Activated CD4-positive, alpha-beta memory T cell treated with anti-CD3 and anti-CD28 coated beads for 36 hours (primary cell): ENCODE measurements at regions of chr18 and their contacts with region 1.

Region 1: DNA sequence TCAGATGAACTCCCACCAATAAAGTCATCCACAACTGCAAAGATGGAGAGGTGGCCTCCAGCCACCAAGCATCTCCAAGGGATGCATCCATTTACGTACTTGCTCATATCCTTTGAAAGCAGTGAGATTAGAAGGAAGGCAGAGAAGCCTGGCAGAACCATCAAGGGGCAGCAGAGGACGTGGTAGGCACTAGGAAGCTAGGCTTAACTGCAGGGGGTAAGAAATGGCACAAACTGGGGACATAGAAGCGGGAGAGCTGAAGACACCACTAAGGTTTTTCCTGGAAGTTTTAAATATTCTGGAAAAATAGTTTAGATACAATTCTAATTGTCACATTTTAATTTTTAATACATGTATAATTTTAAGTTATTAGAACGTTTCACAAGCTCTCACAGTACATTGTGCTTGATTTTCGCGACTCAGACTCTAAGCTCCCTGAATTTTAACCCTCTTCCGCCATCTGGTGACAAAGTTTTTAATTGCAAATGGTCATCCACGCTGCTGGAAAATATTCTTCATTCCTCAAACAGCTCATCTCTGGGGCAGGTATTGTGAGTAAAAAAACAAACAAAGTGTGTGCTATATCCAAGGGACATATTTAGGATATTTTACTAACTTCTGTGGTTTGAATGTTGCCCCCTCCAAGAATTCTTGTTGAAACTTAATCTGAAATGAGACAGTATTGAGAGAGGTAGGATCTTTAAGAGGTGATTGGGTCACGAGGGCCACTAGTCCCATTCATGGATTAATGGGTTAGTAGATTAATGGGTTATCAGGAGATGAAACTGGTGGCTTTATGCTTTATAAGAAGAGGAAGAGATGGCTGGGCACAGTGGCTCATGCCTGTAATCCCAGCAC is 1.6 kb upstream of the PSTPIP2 start:
- DNase-seq: peak; percentile 65
- H3K4me3 Mint-ChIP-seq: no peak overlapping the region
- H3K27ac Mint-ChIP-seq: no peak overlapping the region
- H3K4me1 Mint-ChIP-seq: peaks cover 37% of the 10 kb centered on the region
- H3K27me3 Mint-ChIP-seq: no peaks in the 10 kb centered on the region

Region 2: DNA sequence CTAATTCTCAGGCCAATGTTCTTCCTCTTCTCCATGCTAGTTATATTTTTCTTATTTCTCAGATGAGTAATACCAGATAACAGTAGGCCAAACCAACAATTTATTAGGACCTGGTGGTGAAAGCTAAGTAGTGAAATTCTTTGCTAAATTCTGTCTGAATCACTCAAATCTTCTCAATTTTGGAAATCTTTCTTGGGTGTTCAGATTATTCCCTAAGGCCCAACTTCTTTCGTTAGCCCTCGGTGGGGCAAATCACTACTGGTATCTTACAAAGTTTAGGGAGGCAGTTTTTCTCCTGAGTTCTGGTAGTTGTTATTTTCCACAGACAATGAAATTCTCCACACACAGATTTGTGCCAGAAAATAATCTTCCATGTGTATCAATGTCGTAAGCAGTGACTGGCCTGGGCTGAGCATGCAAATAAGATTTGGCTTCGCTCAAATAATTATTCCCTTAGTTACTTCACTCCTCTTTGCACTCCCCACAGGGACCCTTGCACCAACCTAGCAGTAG is 902.0 kb before region 1 on chr18:
- CTCF ChIA-PET with region 1: no interaction called
- POLR2A ChIA-PET with region 1: no interaction called
- intact Hi-C with region 1: no loop called
- DNase-seq: no peak
- H3K4me3 Mint-ChIP-seq: no peak overlapping the region
- H3K27ac Mint-ChIP-seq: no peak overlapping the region
- H3K4me1 Mint-ChIP-seq: no peaks in the 10 kb centered on the region
- H3K27me3 Mint-ChIP-seq: no peaks in the 10 kb centered on the region

Region 3: GRCh38 chr18:45664824-45665763 is 408.6 kb before region 1 on chr18:
- CTCF ChIA-PET with region 1: interaction called, 49 read pairs
- POLR2A ChIA-PET with region 1: interaction called, 4 read pairs
- intact Hi-C with region 1: loop called (anchors 1 kb)
- DNase-seq: peak; percentile 76
- H3K4me3 Mint-ChIP-seq: no peak overlapping the region
- H3K27ac Mint-ChIP-seq: peak overlapping the region; percentile 43
- H3K4me1 Mint-ChIP-seq: peaks cover 51% of the 10 kb centered on the region
- H3K27me3 Mint-ChIP-seq: no peaks in the 10 kb centered on the region

Region 4: GRCh38 chr18:45677276-45677807 is 396.4 kb before region 1 on chr18:
- CTCF ChIA-PET with region 1: no interaction called
- POLR2A ChIA-PET with region 1: no interaction called
- intact Hi-C with region 1: no loop called
- DNase-seq: no peak
- H3K4me3 Mint-ChIP-seq: no peak overlapping the region
- H3K27ac Mint-ChIP-seq: no peak overlapping the region
- H3K4me1 Mint-ChIP-seq: peaks cover 3% of the 10 kb centered on the region
- H3K27me3 Mint-ChIP-seq: no peaks in the 10 kb centered on the region

Region 5: GRCh38 chr18:45879681-45880655 is 193.7 kb before region 1 on chr18:
- CTCF ChIA-PET with region 1: interaction called, 22 read pairs
- POLR2A ChIA-PET with region 1: no interaction called
- intact Hi-C with region 1: loop called (anchors 2 kb)
- DNase-seq: peak; percentile 81
- H3K4me3 Mint-ChIP-seq: no peak overlapping the region
- H3K27ac Mint-ChIP-seq: no peak overlapping the region
- H3K4me1 Mint-ChIP-seq: peaks cover 14% of the 10 kb centered on the region
- H3K27me3 Mint-ChIP-seq: no peaks in the 10 kb centered on the region

Region 6: DNA sequence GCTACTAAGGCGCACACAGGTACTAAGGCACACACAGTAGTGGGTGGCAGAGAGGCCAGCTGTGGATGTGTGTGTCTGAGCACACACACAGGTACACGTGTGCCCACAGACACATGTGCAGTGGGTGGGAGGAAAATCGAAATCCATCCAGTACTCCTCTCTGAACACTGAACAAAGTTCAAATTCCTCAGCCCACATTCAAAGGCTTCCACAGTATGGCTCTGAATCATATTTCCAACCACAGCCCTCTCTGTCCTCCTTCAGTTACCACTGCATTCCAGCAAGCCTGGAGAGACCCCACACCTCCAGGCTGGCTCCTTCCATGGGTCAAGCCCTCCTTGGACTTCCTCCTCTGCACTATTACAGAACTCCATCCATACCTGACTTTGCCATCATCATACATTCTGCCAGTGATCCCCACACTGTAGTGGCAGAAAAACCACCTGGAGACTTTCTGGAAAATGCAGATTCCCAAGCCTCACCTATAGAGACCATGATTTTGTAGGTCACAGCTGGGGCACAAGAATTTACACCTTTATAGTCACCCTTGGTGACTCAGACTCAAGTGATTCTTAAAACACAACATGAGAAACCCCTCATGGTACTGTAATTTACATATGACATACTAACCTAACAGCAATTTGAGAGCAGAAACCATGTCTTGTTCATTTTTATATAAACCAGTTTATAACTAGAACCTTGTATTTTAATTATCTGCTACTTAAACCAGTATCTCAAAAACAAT is 137.9 kb before region 1 on chr18:
- CTCF ChIA-PET with region 1: interaction called, 23 read pairs
- POLR2A ChIA-PET with region 1: no interaction called
- intact Hi-C with region 1: no loop called
- DNase-seq: no peak
- H3K4me3 Mint-ChIP-seq: no peak overlapping the region
- H3K27ac Mint-ChIP-seq: no peak overlapping the region
- H3K4me1 Mint-ChIP-seq: peaks cover 32% of the 10 kb centered on the region
- H3K27me3 Mint-ChIP-seq: no peaks in the 10 kb centered on the region

Region 7: GRCh38 chr18:45974088-45974536 is 99.6 kb before region 1 on chr18:
- CTCF ChIA-PET with region 1: interaction called, 46 read pairs
- POLR2A ChIA-PET with region 1: interaction called, 4 read pairs
- intact Hi-C with region 1: loop called (anchors 1 kb)
- DNase-seq: peak; percentile 83
- H3K4me3 Mint-ChIP-seq: no peak overlapping the region
- H3K27ac Mint-ChIP-seq: peak overlapping the region; percentile 78
- H3K4me1 Mint-ChIP-seq: peaks cover 5% of the 10 kb centered on the region
- H3K27me3 Mint-ChIP-seq: no peaks in the 10 kb centered on the region

Region 8: GRCh38 chr18:46028536-46028891 is 45.2 kb before region 1 on chr18:
- CTCF ChIA-PET with region 1: interaction called, 10 read pairs
- POLR2A ChIA-PET with region 1: no interaction called
- intact Hi-C with region 1: loop called (anchors 2 kb)
- DNase-seq: no peak
- H3K4me3 Mint-ChIP-seq: peak overlapping the region; percentile 79
- H3K27ac Mint-ChIP-seq: peak overlapping the region; percentile 79
- H3K4me1 Mint-ChIP-seq: peaks cover 14% of the 10 kb centered on the region
- H3K27me3 Mint-ChIP-seq: peaks cover 4% of the 10 kb centered on the region

Region 9: GRCh38 chr18:46084431-46084830 is 10.7 kb after region 1 on chr18:
- CTCF ChIA-PET with region 1: interaction called, 10 read pairs
- POLR2A ChIA-PET with region 1: no interaction called
- intact Hi-C with region 1: no loop called
- DNase-seq: no peak
- H3K4me3 Mint-ChIP-seq: no peak overlapping the region
- H3K27ac Mint-ChIP-seq: no peak overlapping the region
- H3K4me1 Mint-ChIP-seq: peaks cover 3% of the 10 kb centered on the region
- H3K27me3 Mint-ChIP-seq: no peaks in the 10 kb centered on the region

Region 10: DNA sequence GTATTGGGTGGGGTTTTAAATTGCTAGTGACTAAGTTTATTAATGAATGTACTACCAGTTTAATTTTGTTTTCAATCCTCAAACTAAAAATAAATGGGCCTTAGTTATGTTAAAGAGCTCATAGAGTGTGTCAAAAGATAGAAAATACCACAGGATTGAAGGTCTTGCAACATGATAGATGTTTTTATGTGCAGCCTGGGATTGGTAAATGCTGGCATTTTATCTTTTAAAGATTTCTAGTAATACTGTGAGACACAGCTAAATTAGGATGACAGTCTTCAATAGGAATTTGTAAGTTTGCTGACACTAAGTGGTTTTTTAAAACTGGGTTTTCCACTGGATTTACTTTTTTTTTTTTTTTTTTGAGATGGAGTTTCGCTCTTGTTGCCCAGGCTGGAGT is 152.8 kb after region 1 on chr18:
- CTCF ChIA-PET with region 1: no interaction called
- POLR2A ChIA-PET with region 1: no interaction called
- intact Hi-C with region 1: no loop called
- DNase-seq: no peak
- H3K4me3 Mint-ChIP-seq: no peak overlapping the region
- H3K27ac Mint-ChIP-seq: no peak overlapping the region
- H3K4me1 Mint-ChIP-seq: peaks cover 72% of the 10 kb centered on the region
- H3K27me3 Mint-ChIP-seq: no peaks in the 10 kb centered on the region